Ascending aorta (tissue), 2 donors: ENCODE measurements at regions of chr4 and their contacts with region 1.

Region 1: GRCh38 chr4:106266201-106266600 is 49.8 kb downstream of the TBCK start:
- DNase-seq: no peak
- H3K4me3 ChIP-seq: no peak overlapping the region
- H3K27ac ChIP-seq: no peak overlapping the region
- H3K4me1 ChIP-seq: peaks cover 0 to 6% of the 10 kb centered on the region in 2 donors
- H3K27me3 ChIP-seq: no peaks in the 10 kb centered on the region
- CTCF ChIP-seq: peak; percentile 18 to 59 (median 58)

Region 2: DNA sequence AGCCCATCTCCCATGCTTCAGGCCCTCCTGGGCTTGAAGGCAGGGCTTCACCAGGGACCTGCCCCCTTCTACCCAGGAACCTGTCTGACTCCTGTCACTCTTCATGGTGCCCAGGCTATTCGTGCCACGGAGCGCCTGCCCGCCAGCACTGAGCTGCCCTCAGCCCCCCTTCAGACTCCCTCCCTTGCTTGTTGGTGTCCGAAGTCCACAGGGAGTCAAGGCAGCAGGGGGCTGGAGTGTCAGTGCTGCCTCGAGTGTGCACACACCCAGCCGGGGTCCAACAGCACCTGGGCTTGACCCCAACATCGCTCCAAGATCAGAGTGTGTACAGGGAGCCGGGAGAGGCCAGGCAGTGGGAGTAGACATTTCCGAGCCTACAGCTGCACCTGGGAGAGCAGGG is 10.0 kb before region 1 on chr4:
- intact Hi-C with region 1: no loop called
- DNase-seq: no peak
- H3K4me3 ChIP-seq: no peak overlapping the region
- H3K27ac ChIP-seq: no peak overlapping the region
- H3K4me1 ChIP-seq: peaks cover 0 to 3% of the 10 kb centered on the region in 2 donors
- H3K27me3 ChIP-seq: no peaks in the 10 kb centered on the region
- CTCF ChIP-seq: no peak

Region 3: DNA sequence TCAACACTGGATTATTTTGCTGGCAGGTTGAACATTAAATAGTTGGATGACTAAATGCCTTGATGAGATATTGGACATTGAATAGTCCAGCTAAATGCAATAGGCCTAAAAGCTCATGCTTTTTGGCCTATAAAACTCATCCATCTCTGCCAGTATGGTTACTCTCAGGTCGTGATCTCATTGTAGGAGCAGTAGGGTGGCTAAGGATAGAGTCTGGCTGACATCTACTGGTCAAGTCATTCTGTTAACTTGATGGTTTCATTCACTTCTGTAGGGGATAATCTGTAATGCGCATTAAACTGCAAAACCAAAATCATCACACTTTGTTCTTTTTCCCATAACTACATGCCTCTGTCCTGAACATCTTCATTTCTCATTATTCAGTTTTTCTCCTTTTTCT is 542.9 kb after region 1 on chr4:
- intact Hi-C with region 1: loop called (anchors 5 kb)
- DNase-seq: no peak
- H3K4me3 ChIP-seq: no peak overlapping the region
- H3K27ac ChIP-seq: no peak overlapping the region
- H3K4me1 ChIP-seq: no peaks in the 10 kb centered on the region
- H3K27me3 ChIP-seq: no peaks in the 10 kb centered on the region
- CTCF ChIP-seq: peak; percentile 44 to 61 (median 52)